Ovary (tissue), 10 donors: ENCODE measurements at regions of chr1 and their contacts with region 1.

Region 1: DNA sequence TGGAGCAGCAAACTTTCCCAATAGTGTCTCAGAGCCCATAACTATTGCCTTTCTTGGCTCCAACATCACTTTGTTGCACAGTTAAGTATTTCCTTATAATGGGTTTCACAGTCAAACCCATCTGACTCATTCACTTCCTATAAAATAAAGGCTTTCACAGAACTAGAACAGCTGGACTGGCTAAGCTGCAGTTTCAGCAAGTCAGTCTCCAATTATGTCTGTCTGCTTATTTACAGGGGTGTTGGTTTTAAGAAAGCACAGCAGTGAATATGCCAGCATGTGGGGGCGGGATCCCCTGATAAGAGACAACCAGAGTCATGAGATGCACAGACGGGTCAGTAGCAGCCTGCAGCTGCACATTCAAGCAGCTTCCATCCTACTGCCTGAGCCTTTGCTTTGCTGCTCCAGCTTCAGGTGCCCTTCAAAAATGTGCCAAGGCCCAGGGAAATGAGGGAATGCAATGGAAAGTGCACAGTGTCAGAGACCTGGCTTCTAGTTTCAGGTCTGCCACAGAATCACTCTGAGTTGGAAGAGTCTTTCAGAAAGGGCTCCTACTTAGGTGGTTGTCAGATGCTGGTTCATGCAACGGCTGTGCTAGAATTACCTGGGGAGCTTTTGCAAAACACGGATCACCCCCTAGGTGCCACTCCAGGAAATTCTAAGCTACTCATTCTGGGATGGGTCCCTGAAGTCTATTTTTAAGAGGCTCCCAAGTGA is 24.8 kb downstream of the RNF19B start:
- DNase-seq: peak in 4 of 5 donors; percentile 30 to 64 (median 52)
- H3K4me3 ChIP-seq: no peak overlapping the region
- H3K27ac ChIP-seq: no peak overlapping the region
- H3K4me1 ChIP-seq: peaks cover 4% of the 10 kb centered on the region
- H3K27me3 ChIP-seq: no peaks in the 10 kb centered on the region
- CTCF ChIP-seq: no peak
- EP300 ChIP-seq: no peak
- POLR2A ChIP-seq: no peak

Region 2: GRCh38 chr1:33007190-33008050 is 67.6 kb after region 1 on chr1:
- intact Hi-C with region 1: loop called in 1 of 4 experiments (anchors 10 kb)
- DNase-seq: peak in 2 of 5 donors; percentile 20 to 33
- H3K4me3 ChIP-seq: no peak overlapping the region
- H3K27ac ChIP-seq: no peak overlapping the region
- H3K4me1 ChIP-seq: peaks cover 4% of the 10 kb centered on the region
- H3K27me3 ChIP-seq: no peaks in the 10 kb centered on the region
- CTCF ChIP-seq: peak in 1 of 3 donors; percentile 29
- EP300 ChIP-seq: no peak
- POLR2A ChIP-seq: no peak

Region 3: GRCh38 chr1:33055210-33056008 is 115.6 kb after region 1 on chr1:
- intact Hi-C with region 1: loop called in 2 of 4 experiments (anchors 10 kb)
- DNase-seq: peak; percentile 42 to 74 (median 53)
- H3K4me3 ChIP-seq: no peak overlapping the region
- H3K27ac ChIP-seq: no peak overlapping the region
- H3K4me1 ChIP-seq: no peaks in the 10 kb centered on the region
- H3K27me3 ChIP-seq: no peaks in the 10 kb centered on the region
- CTCF ChIP-seq: peak; percentile 44 to 60 (median 44)
- EP300 ChIP-seq: no peak
- POLR2A ChIP-seq: no peak

Region 4: GRCh38 chr1:33080885-33081553 is 141.2 kb after region 1 on chr1 and contains the start of gene AZIN2:
- intact Hi-C with region 1: loop called in 3 of 4 experiments (anchors 10 kb)
- DNase-seq: peak; percentile 98 to 99 (median 99)
- H3K4me3 ChIP-seq: peak within 1 kb of the TSS; percentile 72
- H3K27ac ChIP-seq: peak within 1 kb of the TSS in 1 of 2 donors; percentile 6
- H3K4me1 ChIP-seq: peaks cover 10% of the 10 kb centered on the region
- H3K27me3 ChIP-seq: no peaks in the 10 kb centered on the region
- CTCF ChIP-seq: no peak
- EP300 ChIP-seq: no peak
- POLR2A ChIP-seq: peak; percentile 58
- total RNA-seq, gene AZIN2: 7.6 to 15.7 (median 9.5) TPM